ENCODE measurements at regions of chr21 and their contacts with region 1.

Region 1: DNA sequence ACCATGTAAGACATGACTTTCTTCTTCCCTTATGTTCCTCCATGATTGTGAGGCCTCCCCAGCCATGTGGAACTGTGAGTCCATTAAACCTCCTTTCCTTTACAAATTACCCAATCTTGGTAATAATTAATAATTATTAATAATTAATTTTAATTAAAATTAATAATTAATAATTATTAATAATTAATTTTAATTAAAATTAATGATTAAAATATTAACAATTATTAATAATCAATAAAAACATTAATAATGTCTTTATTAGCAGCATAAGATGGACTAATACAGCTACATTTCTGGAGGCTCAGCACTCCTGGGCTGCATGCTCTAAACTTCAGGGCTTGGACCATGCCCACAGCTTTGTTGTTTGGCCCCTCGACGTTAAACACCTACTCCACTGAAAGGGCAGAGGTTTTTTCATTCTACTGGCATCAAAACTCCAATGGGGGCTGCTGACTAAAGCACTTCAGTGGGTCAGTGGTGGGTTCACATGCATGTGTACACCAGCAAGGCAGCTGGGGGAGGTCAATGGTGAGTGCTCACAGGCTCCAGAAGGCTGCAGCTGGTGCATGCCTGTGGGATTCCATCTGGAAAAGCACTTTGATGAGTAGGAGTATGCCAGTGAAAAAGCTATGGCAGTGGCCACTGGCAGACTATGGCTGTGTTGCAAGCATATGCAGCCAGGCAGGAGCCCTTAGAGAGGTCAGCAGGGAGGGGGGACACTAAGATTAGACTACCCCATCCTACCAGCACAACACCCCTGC is 561.3 kb downstream of the NCAM2 start:
- DNase-seq: no peak
- ATAC-seq: no peak
- H3K4me3 ChIP-seq: no peak overlapping the region
- H3K27ac ChIP-seq: no peak overlapping the region
- H3K4me1 ChIP-seq: no peaks in the 10 kb centered on the region
- H3K27me3 ChIP-seq: no peaks in the 10 kb centered on the region
- CTCF ChIP-seq: no peak
- EP300 ChIP-seq: no peak
- POLR2A ChIP-seq: no peak
- RAD21 ChIP-seq: no peak

Region 2: GRCh38 chr21:21064353-21064752 is 495.1 kb before region 1 on chr21:
- CTCF ChIA-PET with region 1: no interaction called
- POLR2A ChIA-PET with region 1: no interaction called
- RAD21 ChIA-PET with region 1: no interaction called
- SMC1A ChIA-PET with region 1: no interaction called
- in situ Hi-C with region 1: no loop called
- intact Hi-C with region 1: no loop called
- DNase-seq: no peak
- ATAC-seq: no peak
- H3K4me3 ChIP-seq: no peak overlapping the region
- H3K27ac ChIP-seq: no peak overlapping the region
- H3K4me1 ChIP-seq: no peaks in the 10 kb centered on the region
- H3K27me3 ChIP-seq: no peaks in the 10 kb centered on the region
- CTCF ChIP-seq: no peak
- EP300 ChIP-seq: no peak
- POLR2A ChIP-seq: no peak
- RAD21 ChIP-seq: no peak

Region 3: GRCh38 chr21:21612466-21612865 is 53.0 kb after region 1 on chr21:
- CTCF ChIA-PET with region 1: no interaction called
- POLR2A ChIA-PET with region 1: no interaction called
- RAD21 ChIA-PET with region 1: no interaction called
- SMC1A ChIA-PET with region 1: no interaction called
- in situ Hi-C with region 1: no loop called
- intact Hi-C with region 1: loop called (anchors 10 kb)
- DNase-seq: no peak
- ATAC-seq: no peak
- H3K4me3 ChIP-seq: no peak overlapping the region
- H3K27ac ChIP-seq: no peak overlapping the region
- H3K4me1 ChIP-seq: no peaks in the 10 kb centered on the region
- H3K27me3 ChIP-seq: no peaks in the 10 kb centered on the region
- CTCF ChIP-seq: no peak
- EP300 ChIP-seq: no peak
- POLR2A ChIP-seq: no peak
- RAD21 ChIP-seq: no peak

Region 4: GRCh38 chr21:21682178-21682577 is 122.7 kb after region 1 on chr21:
- CTCF ChIA-PET with region 1: no interaction called
- POLR2A ChIA-PET with region 1: no interaction called
- RAD21 ChIA-PET with region 1: no interaction called
- SMC1A ChIA-PET with region 1: no interaction called
- in situ Hi-C with region 1: no loop called
- intact Hi-C with region 1: no loop called
- DNase-seq: no peak
- ATAC-seq: no peak
- H3K4me3 ChIP-seq: no peak overlapping the region
- H3K27ac ChIP-seq: no peak overlapping the region
- H3K4me1 ChIP-seq: no peaks in the 10 kb centered on the region
- H3K27me3 ChIP-seq: no peaks in the 10 kb centered on the region
- CTCF ChIP-seq: no peak
- EP300 ChIP-seq: no peak
- POLR2A ChIP-seq: no peak
- RAD21 ChIP-seq: no peak

Region 5: DNA sequence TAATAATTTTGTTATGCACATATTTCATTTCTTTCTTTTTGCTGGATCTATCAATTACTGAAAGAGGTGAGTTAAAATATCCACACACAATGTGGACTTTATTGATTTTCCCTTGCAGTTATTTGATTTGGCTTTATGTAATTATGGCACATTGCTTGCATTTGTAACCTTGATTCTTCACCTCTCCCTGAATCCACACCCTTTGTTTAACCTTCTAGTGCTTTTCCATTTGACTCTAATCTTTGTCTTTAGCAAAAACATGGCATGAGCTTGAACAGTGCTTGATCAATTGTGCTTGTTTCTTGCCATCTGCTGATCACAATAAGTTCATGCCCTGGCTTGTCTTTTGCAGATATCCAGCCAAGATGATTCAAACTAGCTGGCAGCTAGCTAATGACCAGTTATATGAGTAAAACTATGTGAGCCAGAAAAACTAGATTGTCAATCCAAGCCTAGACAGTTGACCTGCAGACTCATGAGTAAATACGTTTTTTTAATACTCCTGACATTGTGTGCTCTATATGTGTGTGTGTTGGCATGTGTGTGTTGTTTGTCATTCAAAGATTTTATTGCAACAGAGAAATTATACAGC is 337.9 kb after region 1 on chr21:
- CTCF ChIA-PET with region 1: no interaction called
- POLR2A ChIA-PET with region 1: no interaction called
- RAD21 ChIA-PET with region 1: no interaction called
- SMC1A ChIA-PET with region 1: no interaction called
- in situ Hi-C with region 1: no loop called
- intact Hi-C with region 1: no loop called
- DNase-seq: no peak
- ATAC-seq: no peak
- H3K4me3 ChIP-seq: no peak overlapping the region
- H3K27ac ChIP-seq: no peak overlapping the region
- H3K4me1 ChIP-seq: no peaks in the 10 kb centered on the region
- H3K27me3 ChIP-seq: no peaks in the 10 kb centered on the region
- CTCF ChIP-seq: no peak
- EP300 ChIP-seq: no peak
- POLR2A ChIP-seq: no peak
- RAD21 ChIP-seq: no peak